Heart right ventricle (tissue), 16 donors: ENCODE measurements at regions of chr21 and their contacts with region 1.

Region 1: DNA sequence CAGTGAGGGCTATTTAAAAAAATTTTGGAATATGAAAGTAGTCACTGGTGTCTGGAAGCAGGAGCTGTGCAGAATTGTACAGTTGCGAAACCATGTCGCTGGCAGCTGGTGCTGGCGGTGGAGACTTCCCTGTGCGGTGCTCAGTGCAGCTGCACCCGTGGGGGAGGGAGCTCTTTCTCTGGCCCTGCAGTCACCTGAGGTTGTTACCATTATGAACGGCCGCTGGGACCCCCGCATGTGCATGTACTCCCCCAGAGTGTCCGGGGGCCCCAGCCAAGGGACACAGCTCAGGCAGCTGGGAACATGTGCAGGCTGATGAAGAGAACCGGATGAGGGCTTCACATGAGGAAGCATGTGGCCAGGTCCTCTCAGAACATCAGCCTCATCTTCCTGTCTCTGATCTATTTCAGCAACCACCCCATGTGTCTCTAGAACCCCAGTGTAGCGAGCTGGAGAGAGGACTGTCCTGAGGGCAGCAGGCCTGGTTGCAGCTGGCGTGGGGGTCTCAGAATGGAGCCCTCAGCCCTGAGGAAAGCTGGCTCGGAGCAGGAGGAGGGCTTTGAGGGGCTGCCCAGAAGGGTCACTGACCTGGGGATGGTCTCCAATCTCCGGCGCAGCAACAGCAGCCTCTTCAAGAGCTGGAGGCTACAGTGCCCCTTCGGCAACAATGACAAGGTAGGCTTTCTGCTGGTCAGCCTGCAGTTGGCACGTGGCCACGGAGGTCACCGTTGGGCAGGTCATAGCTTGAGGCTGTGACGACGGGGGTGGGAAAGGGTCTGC is at the start of gene TRPM2:
- DNase-seq: peak; percentile 64
- ATAC-seq: peak; percentile 68 to 85 (median 76)
- H3K4me3 ChIP-seq: peak within 1 kb of the TSS in 6 of 10 donors; percentile 10 to 61 (median 32)
- H3K27ac ChIP-seq: peak within 1 kb of the TSS in 8 of 10 donors; percentile 10 to 89 (median 38)
- H3K4me1 ChIP-seq: peaks cover 0 to 71% (median 0%) of the 10 kb centered on the region in 9 donors
- H3K27me3 ChIP-seq: peaks cover 12 to 51% (median 40%) of the 10 kb centered on the region in 7 donors
- CTCF ChIP-seq: no peak
- total RNA-seq, gene TRPM2: 0.34 to 8.5 (median 0.89) TPM

Region 2: GRCh38 chr21:44370027-44370735 is 16.8 kb after region 1 on chr21:
- intact Hi-C with region 1: no loop called
- DNase-seq: no peak
- ATAC-seq: peak in 1 of 8 donors; percentile 26
- H3K4me3 ChIP-seq: no peak overlapping the region
- H3K27ac ChIP-seq: no peak overlapping the region
- H3K4me1 ChIP-seq: peaks cover 0 to 18% (median 0%) of the 10 kb centered on the region in 9 donors
- H3K27me3 ChIP-seq: peaks cover 0 to 64% (median 24%) of the 10 kb centered on the region in 7 donors
- CTCF ChIP-seq: no peak

Region 3: DNA sequence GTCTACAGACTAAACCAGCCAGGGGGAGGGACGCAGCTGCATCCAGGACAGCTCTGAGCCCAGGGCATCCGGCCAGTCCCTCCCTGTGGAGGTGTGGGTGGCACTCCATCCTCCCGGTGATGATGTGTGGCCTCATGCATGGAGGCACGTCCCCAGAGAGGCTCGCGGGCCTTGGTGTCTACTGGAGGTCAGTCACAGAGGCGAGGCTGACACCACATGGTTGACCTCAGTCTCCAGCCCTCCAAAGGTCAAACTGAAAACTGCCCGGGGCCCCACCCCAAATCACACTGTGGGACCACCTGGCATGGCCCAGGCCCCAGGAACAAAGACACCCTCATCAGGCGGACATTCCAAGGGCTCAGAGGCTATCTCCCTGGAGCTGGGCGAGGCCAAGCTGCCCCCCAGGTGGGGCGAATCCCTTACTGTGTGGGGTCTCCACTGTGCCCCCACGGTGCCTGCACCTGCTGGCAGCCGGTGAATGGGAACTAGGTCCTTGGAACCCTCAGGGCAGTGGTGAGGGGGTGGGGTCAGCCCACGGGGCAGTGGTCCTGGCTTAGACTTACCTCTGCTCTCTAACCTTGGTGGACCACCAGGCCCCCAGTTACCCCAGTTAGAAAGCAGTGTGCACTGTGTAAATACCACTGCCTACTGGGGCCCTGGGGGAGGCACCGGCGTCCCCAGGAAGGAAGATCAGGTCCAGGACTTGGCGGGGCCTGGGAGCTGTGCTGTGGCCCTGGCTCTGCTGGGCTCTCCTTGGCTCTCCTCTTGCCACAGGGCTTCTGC is 49.1 kb after region 1 on chr21:
- intact Hi-C with region 1: no loop called
- DNase-seq: no peak
- ATAC-seq: no peak
- H3K4me3 ChIP-seq: no peak overlapping the region
- H3K27ac ChIP-seq: no peak overlapping the region
- H3K4me1 ChIP-seq: no peaks in the 10 kb centered on the region
- H3K27me3 ChIP-seq: peaks cover 0 to 19% (median 0%) of the 10 kb centered on the region in 7 donors
- CTCF ChIP-seq: no peak

Region 4: DNA sequence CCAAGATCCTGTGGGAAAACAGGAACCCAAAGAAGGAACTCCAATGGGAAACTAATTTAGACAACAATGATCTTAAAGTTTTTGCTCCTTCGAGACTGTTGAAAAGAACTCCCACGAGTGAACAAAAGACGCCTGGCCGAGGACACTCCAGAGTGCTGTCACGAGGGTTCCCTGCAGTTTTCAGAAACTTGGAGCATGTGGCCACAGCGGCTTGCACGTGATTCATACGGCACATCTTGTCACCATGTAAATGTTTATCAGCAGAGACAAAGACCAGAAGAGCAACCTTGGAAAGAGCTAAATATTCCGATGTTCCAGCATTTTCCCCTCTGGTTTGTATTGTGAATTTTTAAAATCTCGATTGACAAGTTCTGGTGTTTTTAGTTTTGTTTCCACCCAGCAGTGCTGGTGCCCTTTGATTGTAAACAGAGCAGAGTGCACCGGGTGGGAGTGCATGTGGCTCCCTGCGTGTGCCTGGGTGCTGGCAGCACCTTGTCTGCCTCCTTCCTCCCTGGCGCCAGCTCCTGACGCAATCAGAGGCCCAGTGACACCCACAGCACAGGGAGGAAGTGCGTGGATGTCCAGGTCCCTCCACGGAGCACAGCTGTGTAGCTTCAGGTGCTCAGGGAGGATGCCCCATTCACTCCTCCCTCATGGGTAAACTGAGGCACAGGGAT is 124.9 kb after region 1 on chr21:
- intact Hi-C with region 1: loop called in 2 of 10 experiments (anchors 10 kb)
- DNase-seq: no peak
- ATAC-seq: peak; percentile 43 to 84 (median 68)
- H3K4me3 ChIP-seq: no peak overlapping the region
- H3K27ac ChIP-seq: peak overlapping the region in 3 of 10 donors; percentile 37 to 63 (median 41)
- H3K4me1 ChIP-seq: peaks cover 0 to 24% (median 2%) of the 10 kb centered on the region in 9 donors
- H3K27me3 ChIP-seq: peaks cover 0 to 8% (median 4%) of the 10 kb centered on the region in 7 donors
- CTCF ChIP-seq: no peak